ENCODE measurements at regions of chr4 and their contacts with region 1.

Region 1: GRCh38 chr4:39961311-39961877 is 16.3 kb downstream of the PDS5A start:
- DNase-seq: no peak
- ATAC-seq: no peak
- H3K4me3 ChIP-seq: no peak overlapping the region
- H3K27ac ChIP-seq: no peak overlapping the region
- H3K4me1 ChIP-seq: peaks cover 2% of the 10 kb centered on the region; the same call in 1 of the 2 replicates
- H3K27me3 ChIP-seq: no peaks in the 10 kb centered on the region
- CTCF ChIP-seq: no peak
- POLR2A ChIP-seq: no peak
- RAD21 ChIP-seq: no peak

Region 2: GRCh38 chr4:39505581-39505980 is 455.8 kb before region 1 on chr4:
- CTCF ChIA-PET with region 1: no interaction called
- POLR2A ChIA-PET with region 1: no interaction called
- dilution Hi-C with region 1: no loop called
- in situ Hi-C with region 1: no loop called
- intact Hi-C with region 1: no loop called
- DNase-seq: peak; percentile 15
- ATAC-seq: no peak
- H3K4me3 ChIP-seq: no peak overlapping the region
- H3K27ac ChIP-seq: no peak overlapping the region
- H3K4me1 ChIP-seq: peaks cover 2% of the 10 kb centered on the region
- H3K27me3 ChIP-seq: no peaks in the 10 kb centered on the region
- CTCF ChIP-seq: no peak
- POLR2A ChIP-seq: no peak
- RAD21 ChIP-seq: no peak

Region 3: GRCh38 chr4:39682138-39682537 is 279.3 kb before region 1 on chr4:
- CTCF ChIA-PET with region 1: no interaction called
- POLR2A ChIA-PET with region 1: no interaction called
- dilution Hi-C with region 1: no loop called
- in situ Hi-C with region 1: loop called (anchors 10 kb)
- intact Hi-C with region 1: no loop called
- DNase-seq: no peak
- ATAC-seq: no peak
- H3K4me3 ChIP-seq: no peak overlapping the region
- H3K27ac ChIP-seq: no peak overlapping the region
- H3K4me1 ChIP-seq: no peaks in the 10 kb centered on the region
- H3K27me3 ChIP-seq: no peaks in the 10 kb centered on the region
- CTCF ChIP-seq: no peak
- POLR2A ChIP-seq: no peak
- RAD21 ChIP-seq: no peak

Region 4: GRCh38 chr4:39950861-39951481 is 10.4 kb before region 1 on chr4:
- CTCF ChIA-PET with region 1: interaction called, 5 read pairs
- POLR2A ChIA-PET with region 1: interaction called, 10 read pairs
- dilution Hi-C with region 1: no loop called
- in situ Hi-C with region 1: no loop called
- intact Hi-C with region 1: no loop called
- DNase-seq: peak; percentile 19
- ATAC-seq: peak; percentile 69
- H3K4me3 ChIP-seq: no peak overlapping the region
- H3K27ac ChIP-seq: no peak overlapping the region
- H3K4me1 ChIP-seq: peaks cover 5% of the 10 kb centered on the region
- H3K27me3 ChIP-seq: no peaks in the 10 kb centered on the region
- CTCF ChIP-seq: no peak
- POLR2A ChIP-seq: no peak
- RAD21 ChIP-seq: no peak

Measured in IMR-90 (cell line).